ENCODE measurements at regions of chr13 and their contacts with region 1.

Region 1: GRCh38 chr13:30346153-30346788 is 38.9 kb upstream of the KATNAL1 start:
- DNase-seq: peak; percentile 16 to 87 (median 74)
- ATAC-seq: peak; percentile 97 to 99
- H3K4me3 Mint-ChIP-seq: peak overlapping the region; percentile 46 to 80 (median 72)
- H3K27ac Mint-ChIP-seq: peak overlapping the region; percentile 1 to 89 (median 50)
- H3K4me1 Mint-ChIP-seq: peaks cover 31 to 61% (median 50%) of the 10 kb centered on the region in 4 donors
- H3K27me3 Mint-ChIP-seq: peaks cover 0 to 2% (median 0%) of the 10 kb centered on the region in 5 donors

Region 2: GRCh38 chr13:30438286-30438685 is 92.0 kb after region 1 on chr13:
- POLR2A ChIA-PET with region 1: no interaction called
- DNase-seq: no peak
- ATAC-seq: no peak
- H3K4me3 Mint-ChIP-seq: no peak overlapping the region
- H3K27ac Mint-ChIP-seq: peak overlapping the region in 2 of 10 donors; percentile 6 to 56
- H3K4me1 Mint-ChIP-seq: peaks cover 3 to 18% (median 8%) of the 10 kb centered on the region in 4 donors
- H3K27me3 Mint-ChIP-seq: peaks cover 0 to 2% (median 0%) of the 10 kb centered on the region in 5 donors

Region 3: GRCh38 chr13:30465585-30466357 is 119.5 kb after region 1 on chr13 and contains the start of gene HMGB1:
- POLR2A ChIA-PET with region 1: interaction called, 11 read pairs
- DNase-seq: peak; percentile 86 to 99 (median 96)
- ATAC-seq: peak; percentile 87 to 88
- H3K4me3 Mint-ChIP-seq: peak within 1 kb of the TSS; percentile 88 to 99 (median 96)
- H3K27ac Mint-ChIP-seq: peak within 1 kb of the TSS; percentile 97 to 99 (median 98)
- H3K4me1 Mint-ChIP-seq: peaks cover 10 to 47% (median 24%) of the 10 kb centered on the region in 4 donors
- H3K27me3 Mint-ChIP-seq: peaks cover 0 to 13% (median 0%) of the 10 kb centered on the region in 5 donors
- polyA plus RNA-seq, gene HMGB1: 468 to 703 (median 554) TPM

Measured in naive thymus-derived CD8-positive, alpha-beta T cell (primary cell).